CD8-positive, alpha-beta T cell (primary cell): ENCODE measurements at regions of chr2 and their contacts with region 1.

Region 1: GRCh38 chr2:195520671-195521155 is 136.3 kb upstream of the SLC39A10 start:
- DNase-seq: no peak
- ATAC-seq: no peak
- H3K4me3 ChIP-seq: no peak overlapping the region
- H3K4me3 Mint-ChIP-seq: no peak overlapping the region
- H3K27ac ChIP-seq: no peak overlapping the region
- H3K27ac Mint-ChIP-seq: no peak overlapping the region
- H3K4me1 ChIP-seq: no peaks in the 10 kb centered on the region
- H3K4me1 Mint-ChIP-seq: peaks cover 42% of the 10 kb centered on the region
- H3K27me3 ChIP-seq: no peaks in the 10 kb centered on the region
- H3K27me3 Mint-ChIP-seq: no peaks in the 10 kb centered on the region
- CTCF ChIP-seq: no peak

Region 2: DNA sequence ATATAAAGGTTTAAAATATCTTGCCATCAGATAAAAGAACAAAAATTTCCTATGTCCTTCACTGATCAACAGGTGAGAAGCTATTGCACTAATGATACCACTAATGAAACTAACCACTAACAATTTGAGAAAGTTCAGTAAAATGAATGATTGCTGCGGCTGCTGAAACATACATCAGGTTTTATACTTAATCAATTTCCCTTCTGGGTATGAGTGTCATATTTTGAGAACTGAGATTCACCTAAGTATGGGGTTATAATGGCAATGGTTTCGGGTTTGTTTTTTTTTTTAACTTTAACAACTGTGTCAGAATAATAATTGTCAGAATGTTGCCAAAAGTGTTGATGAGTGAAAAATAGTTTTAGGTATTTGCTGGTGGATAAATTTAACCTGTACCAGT is 15.0 kb before region 1 on chr2:
- CTCF ChIA-PET with region 1: interaction called, 3 read pairs
- POLR2A ChIA-PET with region 1: no interaction called
- intact Hi-C with region 1: loop called in 1 of 2 experiments (anchors 2 kb)
- DNase-seq: no peak
- ATAC-seq: no peak
- H3K4me3 ChIP-seq: no peak overlapping the region
- H3K4me3 Mint-ChIP-seq: no peak overlapping the region
- H3K27ac ChIP-seq: no peak overlapping the region
- H3K27ac Mint-ChIP-seq: no peak overlapping the region
- H3K4me1 ChIP-seq: no peaks in the 10 kb centered on the region
- H3K4me1 Mint-ChIP-seq: peaks cover 13% of the 10 kb centered on the region
- H3K27me3 ChIP-seq: no peaks in the 10 kb centered on the region
- H3K27me3 Mint-ChIP-seq: no peaks in the 10 kb centered on the region
- CTCF ChIP-seq: no peak